Heart left ventricle (tissue), 16 donors: ENCODE measurements at regions of chr1 and their contacts with region 1.

Region 1: DNA sequence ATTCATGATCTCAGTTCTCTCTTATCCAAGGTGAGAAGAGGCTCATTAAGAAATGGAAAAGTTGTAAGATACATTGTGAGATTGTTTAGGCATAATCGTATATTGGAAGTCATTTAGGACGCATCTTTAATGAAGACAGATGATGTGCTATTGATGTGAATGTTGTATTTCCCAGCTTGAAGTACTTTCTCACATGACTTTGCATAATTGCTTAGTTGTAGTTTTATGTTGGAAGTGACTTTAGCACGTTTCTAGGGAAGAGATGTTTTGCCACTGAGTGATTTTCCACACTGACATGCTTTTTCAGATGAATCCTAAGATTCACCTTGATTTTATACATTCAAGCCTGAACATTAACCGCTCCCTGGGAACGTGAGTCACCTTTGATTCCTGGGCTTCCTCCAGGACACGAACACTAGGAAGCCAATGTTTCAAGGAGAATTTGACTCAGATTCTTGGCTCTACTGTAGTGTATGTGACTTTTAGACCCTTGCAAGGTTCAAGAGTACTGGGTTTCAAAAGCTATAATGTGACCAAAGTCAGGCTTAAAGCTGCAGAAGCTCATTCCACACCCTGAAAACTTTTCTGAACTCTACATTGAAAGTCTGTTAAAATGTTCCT is 27.9 kb downstream of the ANGEL2 start:
- DNase-seq: no peak
- ATAC-seq: no peak
- H3K4me3 ChIP-seq: no peak overlapping the region
- H3K27ac ChIP-seq: no peak overlapping the region
- H3K4me1 ChIP-seq: peaks cover 0 to 6% (median 0%) of the 10 kb centered on the region in 12 donors
- H3K27me3 ChIP-seq: no peaks in the 10 kb centered on the region
- CTCF ChIP-seq: no peak
- POLR2A ChIP-seq: no peak

Region 2: GRCh38 chr1:212469701-212470458 is 517.9 kb before region 1 on chr1:
- intact Hi-C with region 1: loop called in 1 of 10 experiments (anchors 10 kb)
- DNase-seq: peak; percentile 60 to 87 (median 70)
- ATAC-seq: peak; percentile 76 to 95 (median 88)
- H3K4me3 ChIP-seq: no peak overlapping the region
- H3K27ac ChIP-seq: peak overlapping the region in 9 of 12 donors; percentile 13 to 84 (median 46)
- H3K4me1 ChIP-seq: peaks cover 0 to 15% (median 3%) of the 10 kb centered on the region in 12 donors
- H3K27me3 ChIP-seq: no peaks in the 10 kb centered on the region
- CTCF ChIP-seq: no peak
- POLR2A ChIP-seq: no peak

Region 3: DNA sequence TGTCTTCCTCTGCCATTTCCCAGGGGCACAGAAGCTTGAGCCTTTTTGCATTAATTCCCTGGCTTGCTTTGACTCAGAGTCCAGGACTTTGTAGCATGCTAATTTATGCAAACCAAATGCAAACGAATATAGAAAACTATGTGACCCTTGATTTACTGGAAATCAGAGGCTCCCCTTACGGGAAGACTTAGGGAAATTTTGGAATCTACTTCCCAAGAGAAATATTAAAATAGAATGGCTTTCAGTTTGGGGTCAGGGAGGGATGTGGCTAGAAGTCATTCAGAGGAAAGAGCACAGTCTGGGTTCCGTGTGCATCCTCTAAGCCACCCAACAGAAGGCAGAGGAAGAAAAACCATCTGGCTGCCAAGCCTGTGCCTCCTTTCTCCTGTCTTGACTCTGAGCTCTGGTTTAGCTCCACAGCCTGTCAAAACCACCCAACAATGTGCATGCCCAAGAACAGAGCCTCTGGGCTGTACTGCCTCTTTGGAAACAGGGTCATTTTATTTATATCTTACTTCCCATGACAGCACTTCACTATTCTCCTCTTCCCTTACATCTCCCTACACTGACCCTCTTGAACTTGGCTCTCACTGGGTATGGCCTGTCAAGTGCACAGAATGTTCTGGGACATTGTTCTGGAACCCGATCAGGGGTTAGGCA is 349.2 kb before region 1 on chr1:
- intact Hi-C with region 1: no loop called
- DNase-seq: peak in 4 of 5 donors; percentile 50 to 70 (median 56)
- ATAC-seq: peak; percentile 81 to 92 (median 88)
- H3K4me3 ChIP-seq: peak overlapping the region in 8 of 12 donors; percentile 25 to 47 (median 38)
- H3K27ac ChIP-seq: peak overlapping the region; percentile 54 to 95 (median 78)
- H3K4me1 ChIP-seq: peaks cover 3 to 60% (median 42%) of the 10 kb centered on the region in 12 donors
- H3K27me3 ChIP-seq: no peaks in the 10 kb centered on the region
- CTCF ChIP-seq: no peak
- POLR2A ChIP-seq: no peak

Region 4: GRCh38 chr1:212655668-212656423 is 332.0 kb before region 1 on chr1:
- intact Hi-C with region 1: loop called in 5 of 10 experiments (anchors 10 kb)
- DNase-seq: no peak
- ATAC-seq: no peak
- H3K4me3 ChIP-seq: no peak overlapping the region
- H3K27ac ChIP-seq: no peak overlapping the region
- H3K4me1 ChIP-seq: peaks cover 0 to 5% (median 0%) of the 10 kb centered on the region in 12 donors
- H3K27me3 ChIP-seq: no peaks in the 10 kb centered on the region
- CTCF ChIP-seq: no peak
- POLR2A ChIP-seq: no peak

Region 5: GRCh38 chr1:214404154-214404553 is 1416.3 kb after region 1 on chr1:
- intact Hi-C with region 1: no loop called
- DNase-seq: no peak
- ATAC-seq: no peak
- H3K4me3 ChIP-seq: no peak overlapping the region
- H3K27ac ChIP-seq: peak overlapping the region in 1 of 12 donors; percentile 8
- H3K4me1 ChIP-seq: peaks cover 0 to 21% (median 1%) of the 10 kb centered on the region in 12 donors
- H3K27me3 ChIP-seq: no peaks in the 10 kb centered on the region
- CTCF ChIP-seq: no peak
- POLR2A ChIP-seq: no peak